Mammary epithelial cell (primary cell): ENCODE measurements at regions of chr13 and their contacts with region 1.

Region 1: GRCh38 chr13:100588331-100589177 is at the start of gene GGACT:
- DNase-seq: peak; percentile 26
- H3K4me3 ChIP-seq: peak within 1 kb of the TSS; percentile 59 to 65 (median 60)
- H3K27ac ChIP-seq: no peak within 1 kb of the TSS
- H3K4me1 ChIP-seq: peaks cover 5% of the 10 kb centered on the region
- H3K27me3 ChIP-seq: no peaks in the 10 kb centered on the region
- CTCF ChIP-seq: peak; percentile 32 to 53
- total RNA-seq, gene GGACT: 4.5 to 5.4 TPM

Region 2: GRCh38 chr13:100514788-100515409 is 73.7 kb before region 1 on chr13:
- CTCF ChIA-PET with region 1: no interaction called
- dilution Hi-C with region 1: no loop called
- in situ Hi-C with region 1: no loop called
- intact Hi-C with region 1: no loop called
- DNase-seq: peak; percentile 48
- H3K4me3 ChIP-seq: no peak overlapping the region
- H3K27ac ChIP-seq: no peak overlapping the region
- H3K4me1 ChIP-seq: no peaks in the 10 kb centered on the region
- H3K27me3 ChIP-seq: no peaks in the 10 kb centered on the region
- CTCF ChIP-seq: peak; percentile 94 to 97

Region 3: GRCh38 chr13:101115762-101116171 is 527.2 kb after region 1 on chr13:
- CTCF ChIA-PET with region 1: no interaction called
- dilution Hi-C with region 1: no loop called
- in situ Hi-C with region 1: loop called (anchors 25 kb)
- intact Hi-C with region 1: no loop called
- DNase-seq: peak; percentile 12
- H3K4me3 ChIP-seq: no peak overlapping the region
- H3K27ac ChIP-seq: no peak overlapping the region
- H3K4me1 ChIP-seq: no peaks in the 10 kb centered on the region
- H3K27me3 ChIP-seq: no peaks in the 10 kb centered on the region
- CTCF ChIP-seq: peak in 1 of 2 donors; percentile 35